Endothelial cell of umbilical vein (primary cell): ENCODE measurements at regions of chr17 and their contacts with region 1.

Region 1: DNA sequence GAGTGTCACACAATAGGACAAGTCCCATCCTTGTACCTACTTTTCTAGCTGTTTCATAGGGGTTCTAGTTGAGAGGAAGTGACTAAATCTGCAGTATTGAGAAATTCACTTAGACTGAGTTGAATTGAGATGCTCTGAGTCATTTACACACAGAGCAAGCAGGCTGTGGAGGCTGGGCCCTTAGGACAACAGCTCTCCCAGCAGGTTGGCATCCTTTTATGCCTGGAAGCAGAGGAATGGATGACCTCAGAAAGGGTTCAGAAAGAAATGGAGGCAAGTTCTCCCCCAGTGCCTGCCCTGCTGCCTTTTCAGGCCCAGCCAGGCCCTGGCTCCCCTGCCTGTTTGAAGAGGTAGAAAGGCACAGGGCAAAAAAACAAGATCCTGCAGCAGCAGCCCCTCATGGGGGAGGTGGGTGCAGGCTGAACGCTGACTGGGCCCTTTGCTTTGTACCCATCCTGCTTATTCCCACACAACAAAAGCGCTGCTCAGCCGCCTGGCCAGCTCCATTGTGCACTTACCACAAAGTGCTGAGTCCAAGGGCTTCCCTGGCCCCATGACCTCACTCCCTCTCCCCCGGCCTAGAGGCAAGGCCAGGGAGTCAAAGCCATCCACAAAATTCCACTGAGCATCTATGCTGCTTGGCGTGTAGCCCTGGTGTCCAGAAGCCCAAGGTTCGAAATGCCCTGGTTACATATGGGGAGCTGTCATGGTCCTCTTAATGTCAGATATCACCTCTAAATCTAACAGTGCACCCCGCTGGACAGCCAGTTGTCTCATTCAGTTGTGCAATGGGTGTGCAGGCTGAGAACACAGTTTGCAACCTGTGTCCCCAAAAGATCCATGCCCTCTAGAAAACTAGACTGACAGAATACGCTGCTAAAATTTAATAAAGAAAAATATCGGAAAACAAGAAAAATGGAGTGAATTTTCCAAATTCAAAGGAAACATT is 5.4 kb upstream of the CRYBA1 start:
- DNase-seq: peak; percentile 82
- H3K4me3 ChIP-seq: no peak overlapping the region
- H3K27ac ChIP-seq: peak overlapping the region; percentile 41
- H3K4me1 ChIP-seq: peaks cover 12% of the 10 kb centered on the region
- H3K27me3 ChIP-seq: no peaks in the 10 kb centered on the region
- CTCF ChIP-seq: no peak
- POLR2A ChIP-seq: no peak

Region 2: GRCh38 chr17:28937044-28937729 is 304.1 kb before region 1 on chr17:
- CTCF ChIA-PET with region 1: no interaction called
- POLR2A ChIA-PET with region 1: no interaction called
- dilution Hi-C with region 1: no loop called
- intact Hi-C with region 1: no loop called
- DNase-seq: no peak
- H3K4me3 ChIP-seq: no peak overlapping the region
- H3K27ac ChIP-seq: no peak overlapping the region
- H3K4me1 ChIP-seq: peaks cover 11% of the 10 kb centered on the region
- H3K27me3 ChIP-seq: no peaks in the 10 kb centered on the region
- CTCF ChIP-seq: no peak
- POLR2A ChIP-seq: no peak

Region 3: DNA sequence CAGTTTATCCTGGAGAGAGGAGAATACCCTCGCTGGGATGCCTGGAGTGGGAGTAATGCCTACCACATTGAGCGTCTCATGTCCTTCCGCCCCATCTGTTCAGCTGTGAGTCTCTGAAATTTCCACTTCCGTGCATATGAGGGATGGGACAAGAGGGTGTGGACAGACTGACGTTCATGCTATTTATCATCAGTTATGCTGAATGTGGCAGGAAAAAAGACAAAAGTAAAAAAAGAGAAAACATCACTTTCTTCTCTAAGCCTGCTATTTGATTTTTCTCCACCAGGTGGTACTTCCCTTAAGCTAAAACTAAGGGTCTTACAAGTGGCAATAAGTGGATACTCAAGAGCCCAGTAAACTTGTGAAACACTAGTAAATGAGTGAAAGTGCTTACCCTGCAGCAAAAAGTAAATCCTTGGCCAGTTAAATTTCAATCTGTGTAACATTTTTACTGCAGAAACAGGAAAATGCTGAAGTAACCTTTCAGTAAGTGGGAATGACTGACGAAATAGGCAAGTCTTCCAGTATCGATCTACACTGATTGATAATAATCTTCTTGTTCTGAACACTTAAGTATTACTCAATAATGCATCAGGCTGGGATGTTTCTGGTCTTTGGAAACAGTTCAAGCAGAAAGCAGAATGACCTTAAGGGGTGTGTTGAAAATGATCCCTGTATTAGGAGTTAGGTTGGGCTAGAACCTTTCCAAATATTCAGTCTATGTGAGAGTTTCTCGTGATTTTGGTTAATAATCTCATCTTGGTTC is 11.0 kb after region 1 on chr17:
- CTCF ChIA-PET with region 1: interaction called, 42 read pairs
- POLR2A ChIA-PET with region 1: no interaction called
- dilution Hi-C with region 1: no loop called
- intact Hi-C with region 1: no loop called
- DNase-seq: peak; percentile 51
- H3K4me3 ChIP-seq: no peak overlapping the region
- H3K27ac ChIP-seq: no peak overlapping the region
- H3K4me1 ChIP-seq: peaks cover 24% of the 10 kb centered on the region
- H3K27me3 ChIP-seq: no peaks in the 10 kb centered on the region
- CTCF ChIP-seq: peak; percentile 37 to 42
- POLR2A ChIP-seq: no peak

Region 4: GRCh38 chr17:29283271-29283895 is 42.1 kb after region 1 on chr17:
- CTCF ChIA-PET with region 1: no interaction called
- POLR2A ChIA-PET with region 1: interaction called, 10 read pairs
- dilution Hi-C with region 1: no loop called
- intact Hi-C with region 1: no loop called
- DNase-seq: no peak
- H3K4me3 ChIP-seq: no peak overlapping the region
- H3K27ac ChIP-seq: no peak overlapping the region
- H3K4me1 ChIP-seq: peaks cover 2% of the 10 kb centered on the region
- H3K27me3 ChIP-seq: no peaks in the 10 kb centered on the region
- CTCF ChIP-seq: no peak
- POLR2A ChIP-seq: no peak

Region 5: GRCh38 chr17:29331708-29332085 is 90.4 kb after region 1 on chr17:
- CTCF ChIA-PET with region 1: no interaction called
- POLR2A ChIA-PET with region 1: no interaction called
- dilution Hi-C with region 1: no loop called
- intact Hi-C with region 1: no loop called
- DNase-seq: no peak
- H3K4me3 ChIP-seq: no peak overlapping the region
- H3K27ac ChIP-seq: no peak overlapping the region
- H3K4me1 ChIP-seq: no peaks in the 10 kb centered on the region
- H3K27me3 ChIP-seq: peaks cover 0 to 1% of the 10 kb centered on the region in 2 experiments
- CTCF ChIP-seq: no peak
- POLR2A ChIP-seq: no peak